ENCODE measurements at regions of chr5 and their contacts with region 1.

Region 1: DNA sequence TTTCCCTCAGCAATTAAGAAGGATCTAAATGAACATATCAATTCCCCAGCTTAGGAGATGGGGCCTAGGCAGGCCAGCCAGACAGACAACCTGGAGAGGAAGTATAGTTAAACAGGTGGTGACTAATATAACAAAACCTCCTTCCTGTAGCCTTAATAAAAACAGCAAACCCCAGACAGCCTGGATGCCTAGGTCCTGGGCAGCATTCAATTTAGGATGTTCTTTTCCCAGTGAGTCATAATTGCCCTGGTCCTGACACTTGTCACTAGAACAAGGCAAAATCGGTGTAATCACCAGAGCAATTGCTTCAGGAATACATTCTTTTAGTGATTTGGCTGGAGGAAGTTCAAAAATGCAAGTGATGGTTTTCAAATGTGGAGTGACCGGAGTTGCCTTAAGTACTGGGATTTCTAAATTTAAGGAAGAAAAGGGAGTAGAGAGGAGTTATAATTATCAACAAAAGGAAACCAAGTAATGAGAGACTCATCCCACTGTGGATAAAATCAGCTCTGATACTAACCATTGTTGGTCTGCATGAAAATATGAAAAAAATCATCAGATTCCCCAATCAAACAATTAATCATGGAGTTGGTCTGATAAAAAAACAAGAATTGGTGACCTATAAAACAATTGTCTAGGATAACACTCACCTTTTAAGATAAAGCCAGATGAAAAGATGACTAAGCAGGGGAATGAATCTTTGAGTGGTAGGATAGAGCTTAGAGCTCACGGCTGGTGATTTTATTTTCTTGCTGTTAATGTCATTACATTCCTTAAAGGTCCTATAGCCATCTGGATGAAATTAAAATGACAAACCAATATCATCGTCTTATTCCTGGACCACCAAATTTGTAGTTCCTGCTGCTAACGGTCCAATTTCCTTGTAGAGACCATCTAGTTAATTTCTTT is 39.0 kb upstream of the TARS1 start:
- DNase-seq: no peak
- H3K4me3 ChIP-seq: no peak overlapping the region
- H3K27ac ChIP-seq: no peak overlapping the region
- H3K4me1 ChIP-seq: no peaks in the 10 kb centered on the region
- H3K27me3 ChIP-seq: no peaks in the 10 kb centered on the region
- CTCF ChIP-seq: no peak
- POLR2A ChIP-seq: no peak

Region 2: DNA sequence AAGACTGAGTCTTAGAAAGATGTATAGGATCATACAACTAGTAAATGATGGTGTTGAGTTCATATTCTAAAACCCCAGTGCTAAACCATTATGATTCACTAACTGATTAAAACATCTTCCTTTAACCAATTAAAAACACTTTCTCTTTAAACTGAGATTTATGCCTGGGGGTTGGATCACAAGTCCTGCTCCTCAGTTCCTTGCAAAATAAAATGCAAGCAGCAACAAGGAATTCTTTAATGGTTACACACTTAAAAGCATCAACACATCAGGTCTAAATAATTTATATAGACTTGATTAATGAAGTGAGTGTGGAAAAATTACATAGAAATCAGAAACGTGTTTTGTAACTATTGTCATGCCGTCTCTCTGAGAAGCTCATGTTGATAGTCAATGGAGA is 228.3 kb after region 1 on chr5:
- intact Hi-C with region 1: loop called (anchors 10 kb)
- DNase-seq: no peak
- H3K4me3 ChIP-seq: no peak overlapping the region
- H3K27ac ChIP-seq: no peak overlapping the region
- H3K4me1 ChIP-seq: no peaks in the 10 kb centered on the region
- H3K27me3 ChIP-seq: no peaks in the 10 kb centered on the region
- CTCF ChIP-seq: no peak
- POLR2A ChIP-seq: no peak